ENCODE measurements at regions of chr16 and their contacts with region 1.

Region 1: GRCh38 chr16:84555418-84556195 is 51.1 kb upstream of the MEAK7 start:
- DNase-seq: peak in 2 of 14 experiments; percentile 30 to 41
- ATAC-seq: peak; percentile 63
- H3K4me3 ChIP-seq: no peak overlapping the region
- H3K4me3 Mint-ChIP-seq: no peak overlapping the region
- H3K27ac ChIP-seq: no peak overlapping the region
- H3K27ac Mint-ChIP-seq: no peak overlapping the region
- H3K4me1 ChIP-seq: peaks cover 28% of the 10 kb centered on the region
- H3K4me1 Mint-ChIP-seq: peaks cover 7% of the 10 kb centered on the region
- H3K27me3 ChIP-seq: no peaks in the 10 kb centered on the region
- H3K27me3 Mint-ChIP-seq: no peaks in the 10 kb centered on the region
- CTCF ChIP-seq: no peak

Region 2: GRCh38 chr16:84464967-84465553 is 90.5 kb before region 1 on chr16:
- CTCF ChIA-PET with region 1: no interaction called
- POLR2A ChIA-PET with region 1: no interaction called
- intact Hi-C with region 1: no loop called
- DNase-seq: no peak
- ATAC-seq: no peak
- H3K4me3 ChIP-seq: no peak overlapping the region
- H3K4me3 Mint-ChIP-seq: no peak overlapping the region
- H3K27ac ChIP-seq: no peak overlapping the region
- H3K27ac Mint-ChIP-seq: no peak overlapping the region
- H3K4me1 ChIP-seq: no peaks in the 10 kb centered on the region
- H3K4me1 Mint-ChIP-seq: no peaks in the 10 kb centered on the region
- H3K27me3 ChIP-seq: no peaks in the 10 kb centered on the region
- H3K27me3 Mint-ChIP-seq: no peaks in the 10 kb centered on the region
- CTCF ChIP-seq: no peak

Region 3: DNA sequence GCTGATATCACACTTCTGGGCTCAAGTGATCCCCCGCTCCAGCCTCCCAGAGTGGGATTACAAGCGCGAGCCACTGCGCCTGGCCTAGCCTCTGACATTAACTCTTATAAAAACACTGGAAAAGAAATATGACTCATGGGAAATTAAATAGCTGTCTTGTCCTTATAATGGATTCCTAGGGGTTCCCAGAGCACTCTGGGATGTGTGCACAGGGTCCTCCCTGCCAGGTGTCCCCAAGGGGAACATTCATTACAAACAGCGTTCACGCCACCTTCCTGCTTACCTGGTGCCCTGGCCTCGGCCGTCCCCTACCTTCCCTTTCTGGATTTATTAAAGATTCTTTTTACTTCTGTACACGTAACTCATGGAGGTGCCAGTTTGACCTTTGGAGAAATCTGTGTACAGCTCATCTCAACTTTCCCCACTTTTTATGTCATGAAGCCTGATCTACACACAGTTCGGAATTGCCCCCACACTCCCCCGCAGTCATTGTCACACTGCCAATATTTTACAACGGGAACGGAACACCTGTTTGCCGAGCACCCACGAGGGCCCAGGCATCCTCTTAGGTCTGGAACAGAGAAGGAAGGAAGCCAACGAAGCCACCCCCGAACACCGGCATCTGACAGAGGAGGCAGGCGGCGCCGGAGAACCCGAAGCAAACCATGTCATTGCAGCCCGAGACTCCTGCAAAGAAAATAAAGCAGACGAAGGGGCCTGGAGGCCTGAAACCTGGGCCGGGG is 11.4 kb before region 1 on chr16:
- CTCF ChIA-PET with region 1: interaction called, 4 read pairs
- POLR2A ChIA-PET with region 1: no interaction called
- intact Hi-C with region 1: loop called in 1 of 2 experiments (anchors 1 kb)
- DNase-seq: peak in 9 of 14 experiments; percentile 20 to 66 (median 34)
- ATAC-seq: no peak
- H3K4me3 ChIP-seq: no peak overlapping the region
- H3K4me3 Mint-ChIP-seq: no peak overlapping the region
- H3K27ac ChIP-seq: no peak overlapping the region
- H3K27ac Mint-ChIP-seq: no peak overlapping the region
- H3K4me1 ChIP-seq: peaks cover 27% of the 10 kb centered on the region
- H3K4me1 Mint-ChIP-seq: peaks cover 12% of the 10 kb centered on the region
- H3K27me3 ChIP-seq: no peaks in the 10 kb centered on the region
- H3K27me3 Mint-ChIP-seq: no peaks in the 10 kb centered on the region
- CTCF ChIP-seq: no peak

Region 4: GRCh38 chr16:84647828-84648594 is 92.4 kb after region 1 on chr16 and contains the start of gene KLHL36:
- CTCF ChIA-PET with region 1: no interaction called
- POLR2A ChIA-PET with region 1: no interaction called
- intact Hi-C with region 1: no loop called
- DNase-seq: peak; percentile 39 to 86 (median 69)
- ATAC-seq: peak; percentile 81
- H3K4me3 ChIP-seq: peak within 1 kb of the TSS; percentile 62
- H3K4me3 Mint-ChIP-seq: peak within 1 kb of the TSS; percentile 96
- H3K27ac ChIP-seq: peak within 1 kb of the TSS; percentile 18 to 62
- H3K27ac Mint-ChIP-seq: peak within 1 kb of the TSS; percentile 93
- H3K4me1 ChIP-seq: peaks cover 49% of the 10 kb centered on the region
- H3K4me1 Mint-ChIP-seq: peaks cover 51% of the 10 kb centered on the region
- H3K27me3 ChIP-seq: no peaks in the 10 kb centered on the region
- H3K27me3 Mint-ChIP-seq: no peaks in the 10 kb centered on the region
- CTCF ChIP-seq: no peak
- total RNA-seq, gene KLHL36: 76.6 to 78.6 TPM

Measured in CD4-positive, alpha-beta T cell (primary cell).